ENCODE measurements at regions of chr4 and their contacts with region 1.

Region 1: DNA sequence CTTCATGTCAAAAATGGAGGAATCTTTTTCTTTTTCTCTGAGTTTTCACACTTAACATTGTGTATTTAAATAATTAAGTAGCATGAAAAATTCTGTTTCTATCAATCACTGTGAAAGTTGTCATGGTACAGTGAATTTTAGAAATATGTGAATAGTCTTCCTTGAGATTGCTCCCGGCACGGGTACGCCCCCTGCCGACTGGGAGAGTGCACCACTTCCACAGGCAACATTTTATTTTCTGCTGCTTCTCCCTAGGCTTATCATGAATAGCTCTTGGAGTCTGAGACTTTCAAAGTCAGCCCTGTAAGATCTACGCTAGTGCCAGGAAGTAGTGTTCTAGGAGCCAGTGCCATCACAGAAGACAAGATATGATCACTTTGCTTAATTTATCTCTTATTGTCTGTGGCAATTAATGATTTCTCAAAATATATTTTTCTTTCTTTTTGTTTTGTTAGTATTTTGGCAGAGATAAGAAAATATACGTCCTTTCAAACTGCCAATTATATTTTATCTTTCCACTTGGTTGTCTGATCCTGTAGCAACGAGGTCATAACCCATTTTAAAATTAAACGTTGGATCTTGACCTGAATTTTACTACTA is 763.8 kb upstream of the AADAT start:
- DNase-seq: peak in 1 of 2 donors; percentile 63
- H3K4me3 ChIP-seq: no peak overlapping the region
- H3K27ac ChIP-seq: no peak overlapping the region
- H3K4me1 ChIP-seq: no peaks in the 10 kb centered on the region
- H3K27me3 ChIP-seq: no peaks in the 10 kb centered on the region
- CTCF ChIP-seq: peak in 2 of 3 experiments; percentile 67 to 69

Region 2: GRCh38 chr4:170589597-170590191 is 263.8 kb before region 1 on chr4:
- intact Hi-C with region 1: loop called (anchors 2 kb)
- DNase-seq: no peak
- H3K4me3 ChIP-seq: no peak overlapping the region
- H3K27ac ChIP-seq: no peak overlapping the region
- H3K4me1 ChIP-seq: no peaks in the 10 kb centered on the region
- H3K27me3 ChIP-seq: no peaks in the 10 kb centered on the region
- CTCF ChIP-seq: peak; percentile 11 to 37 (median 26)

Region 3: GRCh38 chr4:171221181-171221580 is 367.7 kb after region 1 on chr4:
- intact Hi-C with region 1: no loop called
- DNase-seq: no peak
- H3K4me3 ChIP-seq: no peak overlapping the region
- H3K27ac ChIP-seq: no peak overlapping the region
- H3K4me1 ChIP-seq: no peaks in the 10 kb centered on the region
- H3K27me3 ChIP-seq: no peaks in the 10 kb centered on the region
- CTCF ChIP-seq: no peak

Measured in ascending aorta (tissue), 2 donors.